Activated T-helper 2 cell treated with anti-CD3 and anti-CD28 coated beads, Interferon-gamma antibody, Interleukin-2, Interleukin-4, amounts not matched to agents 10 μg/mL and 5 μg/mL and 100 μg/mL, durations not matched to agents 14 hours and 24 hours and 36 hours (primary cell): ENCODE measurements at regions of chr1 and their contacts with region 1.

Region 1: DNA sequence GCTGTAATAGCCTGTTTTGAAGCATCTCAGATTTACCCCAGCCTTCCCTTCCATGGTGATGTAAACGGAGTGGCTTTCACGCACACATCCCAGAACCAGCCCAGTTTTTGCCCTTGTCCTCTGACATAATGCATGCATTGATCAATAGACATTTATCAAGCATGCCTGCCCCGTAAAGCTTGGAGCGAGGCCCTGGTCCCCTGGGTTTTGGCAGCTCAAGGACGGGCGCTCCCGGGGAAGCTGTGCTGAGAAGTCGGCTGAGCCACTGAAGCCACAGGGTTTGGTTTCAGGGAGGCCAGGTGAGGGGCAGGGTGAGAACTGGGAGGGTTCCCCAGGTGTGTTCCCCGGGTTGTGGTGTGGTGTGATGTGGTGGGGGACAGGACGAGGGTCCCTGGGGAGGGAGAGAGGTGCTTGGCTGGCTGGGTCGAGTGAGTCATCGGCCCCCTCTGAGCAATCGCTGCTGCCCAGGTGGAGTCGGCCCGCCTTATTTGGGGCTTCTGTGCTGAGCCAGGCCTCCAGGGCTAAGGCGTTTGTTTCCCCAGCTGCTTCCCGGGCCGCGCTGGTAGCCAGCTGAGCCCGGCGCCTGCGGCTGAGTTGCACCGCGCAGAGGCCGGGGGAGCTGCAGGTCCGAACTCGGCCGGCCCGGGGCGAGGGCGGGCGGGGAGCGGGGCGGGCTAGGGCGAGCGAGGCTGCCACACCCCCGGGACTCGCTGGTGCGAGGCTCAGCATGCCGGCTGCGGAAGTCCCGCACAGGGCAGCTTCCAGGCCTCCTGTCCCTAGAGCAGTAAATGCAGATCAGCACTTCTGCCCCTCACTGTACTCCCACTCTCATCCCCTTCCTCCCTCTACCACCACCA is 23.6 kb downstream of the ATP2B4 start:
- DNase-seq: peak; percentile 41
- H3K4me3 Mint-ChIP-seq: peak overlapping the region; percentile 70
- H3K27ac Mint-ChIP-seq: peak overlapping the region; percentile 95
- H3K4me1 Mint-ChIP-seq: peaks cover 63% of the 10 kb centered on the region
- H3K27me3 Mint-ChIP-seq: no peaks in the 10 kb centered on the region

Region 2: GRCh38 chr1:203607533-203607873 is 42.7 kb before region 1 on chr1:
- intact Hi-C with region 1: loop called (anchors 1 kb)
- DNase-seq: no peak
- H3K4me3 Mint-ChIP-seq: no peak overlapping the region
- H3K27ac Mint-ChIP-seq: peak overlapping the region; percentile 99
- H3K4me1 Mint-ChIP-seq: peaks cover 46% of the 10 kb centered on the region
- H3K27me3 Mint-ChIP-seq: no peaks in the 10 kb centered on the region

Region 3: DNA sequence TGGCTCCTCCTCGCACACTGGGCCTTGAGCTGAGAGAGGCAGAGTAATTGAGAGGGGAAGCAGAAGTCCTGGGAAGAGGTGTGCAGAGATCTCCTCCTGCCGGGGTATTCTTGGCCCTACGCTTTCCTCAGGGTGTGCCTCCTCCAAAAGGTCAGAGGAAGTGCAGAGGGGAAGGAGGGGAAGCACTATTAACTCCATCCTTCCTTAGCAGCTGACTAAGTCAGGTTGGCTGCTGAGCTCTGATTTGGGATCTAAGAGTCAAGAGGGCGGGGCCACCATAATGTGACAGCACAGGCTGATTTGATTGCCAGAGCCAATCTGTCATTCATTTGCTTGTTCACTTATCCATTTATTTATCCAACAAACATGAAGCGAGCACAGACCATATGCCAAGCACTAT is 11.3 kb before region 1 on chr1:
- intact Hi-C with region 1: no loop called
- DNase-seq: no peak
- H3K4me3 Mint-ChIP-seq: no peak overlapping the region
- H3K27ac Mint-ChIP-seq: peak overlapping the region; percentile 45
- H3K4me1 Mint-ChIP-seq: peaks cover 38% of the 10 kb centered on the region
- H3K27me3 Mint-ChIP-seq: no peaks in the 10 kb centered on the region

Region 4: DNA sequence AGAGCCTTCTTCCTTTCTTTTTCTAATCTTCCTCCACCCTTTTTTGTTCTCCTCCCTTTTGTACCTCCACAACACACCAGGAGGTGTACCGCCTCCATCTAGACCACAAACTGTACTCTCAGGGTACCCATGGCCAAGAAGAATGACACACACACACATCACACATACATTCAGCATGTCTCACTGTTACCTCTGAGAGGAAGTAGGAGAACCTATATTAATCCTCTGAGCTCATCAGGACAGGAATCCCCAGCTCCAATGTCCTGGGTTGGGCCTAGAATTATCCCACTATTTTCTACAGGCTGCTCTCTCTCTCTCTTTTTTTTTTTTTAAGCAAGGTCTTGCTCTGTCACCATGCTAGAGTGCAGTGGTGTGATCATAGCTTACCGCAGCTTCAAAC is 13.1 kb after region 1 on chr1:
- intact Hi-C with region 1: loop called (anchors 1 kb)
- DNase-seq: no peak
- H3K4me3 Mint-ChIP-seq: peak overlapping the region; percentile 30
- H3K27ac Mint-ChIP-seq: peak overlapping the region; percentile 85
- H3K4me1 Mint-ChIP-seq: peaks cover 53% of the 10 kb centered on the region
- H3K27me3 Mint-ChIP-seq: no peaks in the 10 kb centered on the region

Region 5: DNA sequence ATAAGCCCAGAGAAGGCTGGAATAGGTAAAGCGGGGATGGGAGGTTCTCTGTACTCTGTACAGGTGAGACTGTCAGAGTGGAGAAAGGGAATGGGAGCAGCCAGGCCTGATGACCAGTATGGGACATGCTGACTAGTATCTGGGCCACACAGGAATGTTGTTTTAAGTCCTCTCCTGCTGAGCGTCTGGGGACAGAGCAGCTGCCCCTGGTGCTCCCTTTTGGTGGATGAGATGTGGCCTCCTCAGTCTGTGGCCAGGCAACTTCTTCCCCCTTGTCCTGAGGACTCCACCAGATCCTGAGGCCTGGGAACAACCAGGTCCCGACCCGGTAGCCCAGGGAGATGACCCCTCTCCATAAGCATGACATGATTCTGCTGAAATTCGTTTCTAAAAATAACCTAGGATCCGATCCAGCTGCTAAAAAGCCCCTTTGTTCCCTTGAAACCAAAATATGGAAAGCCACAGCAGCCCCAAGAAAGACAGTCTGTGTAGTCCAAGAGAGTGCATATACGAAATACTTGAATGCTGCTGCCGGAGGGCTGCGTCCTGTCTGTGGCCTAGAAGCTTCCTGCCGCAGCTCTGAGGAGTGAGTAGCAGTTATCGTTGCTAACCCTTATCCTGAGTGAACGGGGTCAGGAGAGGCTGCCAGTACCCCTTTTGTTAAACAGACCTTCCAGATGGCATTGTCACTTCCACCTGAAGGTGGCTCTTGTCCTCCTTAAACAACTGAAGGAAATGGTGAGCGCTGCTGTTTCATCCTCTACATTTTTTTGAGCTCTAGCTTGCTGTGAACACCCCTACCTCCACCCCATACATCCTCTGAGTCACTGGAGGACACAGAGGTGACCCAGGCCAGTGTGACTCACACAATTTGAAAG is 23.6 kb after region 1 on chr1:
- intact Hi-C with region 1: loop called (anchors 1 kb)
- DNase-seq: peak; percentile 73
- H3K4me3 Mint-ChIP-seq: peak overlapping the region; percentile 69
- H3K27ac Mint-ChIP-seq: peak overlapping the region; percentile 94
- H3K4me1 Mint-ChIP-seq: peaks cover 55% of the 10 kb centered on the region
- H3K27me3 Mint-ChIP-seq: no peaks in the 10 kb centered on the region

Region 6: GRCh38 chr1:203682473-203683383 is 32.5 kb after region 1 on chr1:
- intact Hi-C with region 1: loop called (anchors 1 kb)
- DNase-seq: peak; percentile 72
- H3K4me3 Mint-ChIP-seq: peak overlapping the region; percentile 35
- H3K27ac Mint-ChIP-seq: peak overlapping the region; percentile 93
- H3K4me1 Mint-ChIP-seq: peaks cover 34% of the 10 kb centered on the region
- H3K27me3 Mint-ChIP-seq: no peaks in the 10 kb centered on the region

Region 7: DNA sequence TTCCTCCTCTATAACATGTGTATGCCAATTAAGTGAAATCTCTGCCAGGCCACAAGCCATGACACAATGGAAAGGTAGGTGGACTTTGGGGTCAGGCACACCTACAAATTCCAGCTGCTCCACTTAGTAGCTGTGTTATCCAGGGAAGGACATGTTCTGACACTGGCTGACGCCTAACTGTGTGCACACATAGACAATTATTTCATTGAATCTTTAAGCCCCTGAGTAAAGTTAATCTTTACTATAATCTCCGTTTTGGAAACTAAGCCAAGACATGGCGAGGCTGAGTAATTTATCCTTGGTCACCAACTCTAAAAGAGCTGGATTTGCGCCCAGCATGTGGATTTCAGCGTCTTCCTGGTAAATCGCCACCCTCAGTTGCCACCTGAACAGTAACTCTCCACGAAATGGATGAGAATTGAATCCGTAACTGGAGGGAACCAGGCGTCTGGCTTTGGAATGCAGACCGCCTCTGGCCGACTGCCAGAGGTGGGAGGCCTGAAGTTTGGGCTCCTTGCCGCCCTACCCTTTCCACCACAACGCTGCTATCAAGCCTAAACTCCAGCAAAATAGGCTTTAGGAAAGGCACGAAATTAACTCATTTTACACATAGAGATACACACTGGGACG is 210.3 kb after region 1 on chr1:
- intact Hi-C with region 1: no loop called
- DNase-seq: no peak
- H3K4me3 Mint-ChIP-seq: peak overlapping the region; percentile 100
- H3K27ac Mint-ChIP-seq: peak overlapping the region; percentile 97
- H3K4me1 Mint-ChIP-seq: peaks cover 15% of the 10 kb centered on the region
- H3K27me3 Mint-ChIP-seq: no peaks in the 10 kb centered on the region